OCI-LY7 (cell line): ENCODE measurements at regions of chr2 and their contacts with region 1.

Region 1: DNA sequence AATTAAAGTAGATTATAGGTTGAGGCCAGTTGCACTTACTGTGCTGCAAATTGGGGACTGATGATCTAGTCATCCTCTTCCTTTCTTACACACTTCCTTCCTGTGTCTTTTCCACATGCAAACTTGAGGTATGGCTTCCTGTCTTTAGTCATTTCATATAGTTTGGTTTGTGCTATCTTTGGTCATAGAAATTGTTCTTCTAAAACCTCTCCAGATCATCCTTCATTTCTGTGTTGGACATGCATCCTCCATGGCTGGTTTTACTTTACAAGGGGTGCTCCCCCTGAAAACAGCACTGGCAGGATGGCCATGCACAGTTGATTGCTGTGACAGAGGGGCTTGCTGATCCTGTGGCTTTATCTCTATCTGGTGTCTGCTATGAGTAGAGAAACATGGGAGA is 36.5 kb downstream of the MGAT5 start:
- DNase-seq: peak; percentile 59
- H3K4me3 ChIP-seq: peak overlapping the region; percentile 44
- H3K27ac ChIP-seq: peak overlapping the region; percentile 50
- H3K4me1 ChIP-seq: peaks cover 94% of the 10 kb centered on the region
- CTCF ChIP-seq: no peak

Region 2: GRCh38 chr2:134261398-134262131 is 28.8 kb before region 1 on chr2:
- CTCF ChIA-PET with region 1: interaction called, 3 read pairs
- POLR2A ChIA-PET with region 1: interaction called, 14 read pairs
- intact Hi-C with region 1: no loop called
- DNase-seq: peak; percentile 75
- H3K4me3 ChIP-seq: peak overlapping the region; percentile 40
- H3K27ac ChIP-seq: peak overlapping the region; percentile 91
- H3K4me1 ChIP-seq: peaks cover 86% of the 10 kb centered on the region
- CTCF ChIP-seq: no peak